Naive thymus-derived CD4-positive, alpha-beta T cell (primary cell): ENCODE measurements at regions of chr2 and their contacts with region 1.

Region 1: DNA sequence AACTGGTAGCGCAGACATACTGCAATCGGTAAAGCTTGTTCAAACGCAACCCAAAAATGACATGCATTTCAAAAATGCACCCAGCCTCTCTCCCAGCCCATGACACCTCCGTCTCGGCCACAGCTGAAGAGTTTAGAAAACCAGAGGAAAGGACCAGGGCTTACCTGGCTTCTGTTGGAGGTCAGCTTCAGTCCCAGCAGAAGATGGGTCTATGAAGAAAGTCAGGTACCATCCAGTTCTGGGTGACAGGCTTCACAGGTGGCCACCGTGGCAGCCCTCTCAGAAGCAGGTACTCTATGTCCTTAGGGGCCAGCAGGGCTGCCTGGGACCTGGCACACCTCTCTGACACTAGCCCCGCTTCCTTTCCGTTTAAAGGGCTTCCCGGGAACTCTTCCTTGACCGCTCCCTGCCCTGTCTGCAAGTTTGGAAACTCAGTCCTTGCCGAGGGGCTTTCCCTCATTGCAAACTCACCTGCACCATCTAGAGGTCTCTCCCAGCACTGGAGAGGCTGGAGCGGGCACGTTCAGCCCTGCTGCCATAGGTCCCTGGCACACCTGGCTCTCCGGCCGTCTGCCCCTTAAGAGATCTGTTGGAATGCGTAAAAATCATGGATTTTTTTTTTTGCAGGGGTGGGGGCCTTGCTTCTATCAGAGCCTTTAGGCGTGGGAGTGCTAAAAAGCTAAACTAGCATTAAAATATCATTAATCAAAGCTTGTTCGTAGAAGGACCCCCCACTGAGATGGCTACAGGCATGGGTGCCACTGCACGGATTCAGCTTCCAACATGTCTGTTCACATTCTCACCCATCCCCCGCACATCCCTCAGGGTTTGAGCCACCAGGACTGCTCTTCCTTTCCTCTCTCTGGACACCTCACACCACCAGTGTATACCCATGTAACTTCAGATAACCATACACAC is at the start of gene EDAR:
- DNase-seq: peak; percentile 24 to 72 (median 61)
- ATAC-seq: peak; percentile 85
- H3K4me3 ChIP-seq: peak within 1 kb of the TSS; percentile 80
- H3K4me3 Mint-ChIP-seq: peak within 1 kb of the TSS; percentile 77 to 99 (median 96)
- H3K27ac ChIP-seq: peak within 1 kb of the TSS; percentile 74
- H3K27ac Mint-ChIP-seq: peak within 1 kb of the TSS in 8 of 9 donors; percentile 83 to 98 (median 96)
- H3K4me1 ChIP-seq: peaks cover 2 to 35% of the 10 kb centered on the region in 2 donors
- H3K4me1 Mint-ChIP-seq: peaks cover 21 to 74% (median 69%) of the 10 kb centered on the region in 7 donors
- H3K27me3 ChIP-seq: no peaks in the 10 kb centered on the region
- H3K27me3 Mint-ChIP-seq: peaks cover 0 to 37% (median 0%) of the 10 kb centered on the region in 5 donors
- total RNA-seq, gene EDAR: 0.17 to 26.8 (median 21.6) TPM

Region 2: DNA sequence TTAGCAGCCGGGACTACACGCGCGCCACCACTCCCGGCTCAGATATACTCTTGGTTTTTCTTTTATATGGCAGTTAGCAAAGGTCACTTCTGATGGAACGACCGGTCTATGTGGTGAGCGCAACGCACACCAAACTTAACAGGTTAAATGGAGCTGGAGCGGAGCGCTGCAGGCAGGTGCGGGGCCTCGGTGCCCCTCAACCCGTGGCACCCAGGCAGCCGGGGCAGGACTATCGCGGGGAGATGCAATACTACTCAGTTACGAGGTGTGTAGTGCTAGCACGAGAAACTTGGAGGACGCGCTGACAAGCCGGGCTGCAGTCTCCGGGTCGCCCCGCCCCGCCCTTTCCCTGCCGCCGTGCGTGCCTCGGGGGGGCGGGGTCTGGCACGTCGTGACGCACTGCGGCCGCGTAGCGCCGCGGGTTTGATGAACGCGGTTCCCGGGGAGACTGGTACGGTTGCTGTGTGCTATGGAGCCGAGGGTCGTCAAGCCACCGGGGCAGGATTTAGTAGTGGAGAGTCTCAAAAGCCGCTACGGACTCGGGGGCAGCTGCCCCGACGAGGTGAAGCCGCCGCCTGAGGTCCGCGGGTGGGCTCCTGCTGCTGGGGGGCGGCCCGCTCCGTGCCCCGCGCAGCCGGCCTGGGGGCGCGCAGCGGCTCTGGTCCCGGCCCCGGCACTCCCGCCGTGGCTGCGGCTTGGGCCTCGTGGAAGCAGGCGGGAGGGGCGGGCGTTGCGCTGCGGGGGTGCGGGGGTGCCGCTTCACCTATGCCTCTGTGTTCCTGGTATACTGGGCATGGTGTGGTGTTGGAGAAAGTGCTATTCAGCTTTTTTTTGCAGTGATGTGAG is 202.5 kb before region 1 on chr2 and contains the start of gene CCDC138:
- CTCF ChIA-PET with region 1: no interaction called
- POLR2A ChIA-PET with region 1: no interaction called
- intact Hi-C with region 1: loop called in 1 of 2 experiments (anchors 1 kb)
- DNase-seq: peak; percentile 86 to 93 (median 91)
- ATAC-seq: peak; percentile 98
- H3K4me3 ChIP-seq: peak within 1 kb of the TSS; percentile 88
- H3K4me3 Mint-ChIP-seq: peak within 1 kb of the TSS; percentile 88 to 100 (median 97)
- H3K27ac ChIP-seq: peak within 1 kb of the TSS; percentile 90
- H3K27ac Mint-ChIP-seq: peak within 1 kb of the TSS; percentile 69 to 99 (median 97)
- H3K4me1 ChIP-seq: peaks cover 6 to 13% of the 10 kb centered on the region in 2 donors
- H3K4me1 Mint-ChIP-seq: peaks cover 6 to 21% (median 17%) of the 10 kb centered on the region in 7 donors
- H3K27me3 ChIP-seq: no peaks in the 10 kb centered on the region
- H3K27me3 Mint-ChIP-seq: no peaks in the 10 kb centered on the region
- total RNA-seq, gene CCDC138: 2.7 to 10.5 (median 7.5) TPM

Region 3: DNA sequence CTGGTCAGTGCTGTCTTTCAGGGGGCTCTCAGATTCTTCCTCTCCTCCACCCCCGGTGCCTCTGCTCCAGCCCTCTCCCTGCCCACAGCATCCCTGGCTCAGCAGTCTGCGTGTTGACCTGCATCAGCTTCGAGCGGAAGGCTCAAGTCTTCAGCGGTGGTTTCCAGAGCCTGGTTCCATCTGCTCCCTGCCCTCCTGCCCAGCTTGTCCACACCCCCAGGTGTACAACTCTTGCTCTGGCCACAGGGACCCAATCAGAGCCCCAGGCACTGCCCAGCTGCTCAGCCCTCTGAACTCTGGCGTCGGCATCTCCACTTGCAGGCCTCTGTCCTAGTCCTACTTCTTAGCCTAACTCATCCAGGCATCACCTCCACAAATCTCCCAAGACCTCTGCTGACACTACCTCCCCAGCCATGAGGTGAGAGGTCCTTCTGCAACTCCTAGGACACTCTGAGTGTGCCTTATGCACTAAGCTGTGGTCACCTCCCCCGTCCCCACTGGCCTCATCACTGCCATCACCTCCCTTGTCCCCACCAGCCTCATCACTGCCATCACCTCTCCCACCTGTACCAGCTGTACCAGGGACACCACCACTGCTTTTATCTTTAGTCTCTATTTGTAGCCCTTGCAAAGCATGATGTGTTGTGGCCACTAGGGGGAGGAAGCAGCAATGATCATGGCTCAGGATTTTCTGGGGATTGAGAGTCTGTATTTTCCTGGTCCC is 61.0 kb before region 1 on chr2:
- CTCF ChIA-PET with region 1: interaction called, 49 read pairs
- POLR2A ChIA-PET with region 1: interaction called, 7 read pairs
- intact Hi-C with region 1: loop called (anchors 1 kb)
- DNase-seq: peak in 6 of 9 donors; percentile 33 to 59 (median 50)
- ATAC-seq: peak; percentile 38
- H3K4me3 ChIP-seq: no peak overlapping the region
- H3K4me3 Mint-ChIP-seq: no peak overlapping the region
- H3K27ac ChIP-seq: no peak overlapping the region
- H3K27ac Mint-ChIP-seq: peak overlapping the region in 5 of 9 donors; percentile 0 to 28 (median 4)
- H3K4me1 ChIP-seq: peaks cover 0 to 5% of the 10 kb centered on the region in 2 donors
- H3K4me1 Mint-ChIP-seq: peaks cover 2 to 34% (median 25%) of the 10 kb centered on the region in 7 donors
- H3K27me3 ChIP-seq: no peaks in the 10 kb centered on the region
- H3K27me3 Mint-ChIP-seq: no peaks in the 10 kb centered on the region

Region 4: DNA sequence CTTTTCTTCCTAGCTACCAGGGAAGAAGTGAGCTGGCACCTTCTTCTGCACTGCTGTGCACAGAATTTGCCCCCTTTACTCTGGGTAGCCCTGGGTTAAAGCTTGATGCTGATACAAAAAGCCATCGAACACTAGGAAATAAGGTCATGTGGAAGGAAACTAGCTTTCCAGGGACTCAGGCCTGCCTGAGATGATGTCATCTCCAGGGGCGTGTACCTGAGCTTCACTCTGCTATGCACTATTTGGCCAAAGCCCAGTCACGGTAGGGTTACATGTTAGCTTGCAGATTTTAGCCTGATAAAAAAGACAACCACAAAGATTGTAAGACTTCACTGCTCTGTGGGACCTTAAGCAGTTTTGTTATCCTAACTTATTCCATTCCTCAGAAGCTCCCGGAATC is 20.4 kb before region 1 on chr2:
- CTCF ChIA-PET with region 1: interaction called, 8 read pairs
- POLR2A ChIA-PET with region 1: interaction called, 6 read pairs
- intact Hi-C with region 1: loop called in 1 of 2 experiments (anchors 2 kb)
- DNase-seq: no peak
- ATAC-seq: no peak
- H3K4me3 ChIP-seq: no peak overlapping the region
- H3K4me3 Mint-ChIP-seq: peak overlapping the region in 8 of 10 donors; percentile 1 to 81 (median 54)
- H3K27ac ChIP-seq: peak overlapping the region; percentile 10
- H3K27ac Mint-ChIP-seq: peak overlapping the region in 8 of 9 donors; percentile 28 to 91 (median 72)
- H3K4me1 ChIP-seq: peaks cover 21 to 71% of the 10 kb centered on the region in 2 donors
- H3K4me1 Mint-ChIP-seq: peaks cover 21 to 100% (median 95%) of the 10 kb centered on the region in 7 donors
- H3K27me3 ChIP-seq: no peaks in the 10 kb centered on the region
- H3K27me3 Mint-ChIP-seq: no peaks in the 10 kb centered on the region

Region 5: GRCh38 chr2:109062859-109063700 is 74.0 kb after region 1 on chr2:
- CTCF ChIA-PET with region 1: no interaction called
- POLR2A ChIA-PET with region 1: no interaction called
- intact Hi-C with region 1: loop called in 1 of 2 experiments (anchors 2 kb)
- DNase-seq: peak in 5 of 9 donors; percentile 17 to 37 (median 22)
- ATAC-seq: no peak
- H3K4me3 ChIP-seq: no peak overlapping the region
- H3K4me3 Mint-ChIP-seq: peak overlapping the region in 9 of 10 donors; percentile 5 to 62 (median 56)
- H3K27ac ChIP-seq: no peak overlapping the region
- H3K27ac Mint-ChIP-seq: peak overlapping the region in 7 of 9 donors; percentile 30 to 74 (median 62)
- H3K4me1 ChIP-seq: peaks cover 0 to 13% of the 10 kb centered on the region in 2 donors
- H3K4me1 Mint-ChIP-seq: peaks cover 11 to 61% (median 46%) of the 10 kb centered on the region in 7 donors
- H3K27me3 ChIP-seq: no peaks in the 10 kb centered on the region
- H3K27me3 Mint-ChIP-seq: peaks cover 0 to 4% (median 0%) of the 10 kb centered on the region in 5 donors

Region 6: GRCh38 chr2:109128048-109128465 is 139.0 kb after region 1 on chr2:
- CTCF ChIA-PET with region 1: interaction called, 3 read pairs
- POLR2A ChIA-PET with region 1: interaction called, 8 read pairs
- intact Hi-C with region 1: loop called in 1 of 2 experiments (anchors 1 kb)
- DNase-seq: peak; percentile 49 to 76 (median 70)
- ATAC-seq: peak; percentile 80
- H3K4me3 ChIP-seq: peak overlapping the region; percentile 64
- H3K4me3 Mint-ChIP-seq: peak overlapping the region; percentile 81 to 100 (median 87)
- H3K27ac ChIP-seq: peak overlapping the region; percentile 67
- H3K27ac Mint-ChIP-seq: peak overlapping the region in 8 of 9 donors; percentile 64 to 93 (median 80)
- H3K4me1 ChIP-seq: peaks cover 0 to 16% of the 10 kb centered on the region in 2 donors
- H3K4me1 Mint-ChIP-seq: peaks cover 24 to 68% (median 55%) of the 10 kb centered on the region in 7 donors
- H3K27me3 ChIP-seq: no peaks in the 10 kb centered on the region
- H3K27me3 Mint-ChIP-seq: peaks cover 0 to 54% (median 0%) of the 10 kb centered on the region in 5 donors

Region 7: GRCh38 chr2:109510136-109511028 is 521.3 kb after region 1 on chr2:
- CTCF ChIA-PET with region 1: no interaction called
- POLR2A ChIA-PET with region 1: interaction called, 3 read pairs
- intact Hi-C with region 1: loop called in 1 of 2 experiments (anchors 1 kb)
- DNase-seq: peak; percentile 56 to 83 (median 74)
- ATAC-seq: peak; percentile 80
- H3K4me3 ChIP-seq: no peak overlapping the region
- H3K4me3 Mint-ChIP-seq: no peak overlapping the region
- H3K27ac ChIP-seq: no peak overlapping the region
- H3K27ac Mint-ChIP-seq: peak overlapping the region in 4 of 9 donors; percentile 22 to 46 (median 44)
- H3K4me1 ChIP-seq: peaks cover 0 to 2% of the 10 kb centered on the region in 2 donors
- H3K4me1 Mint-ChIP-seq: peaks cover 0 to 7% (median 4%) of the 10 kb centered on the region in 7 donors
- H3K27me3 ChIP-seq: no peaks in the 10 kb centered on the region
- H3K27me3 Mint-ChIP-seq: no peaks in the 10 kb centered on the region